Cardiac septum (tissue), 1 donor: ENCODE measurements at regions of chr12 and their contacts with region 1.

Region 1: DNA sequence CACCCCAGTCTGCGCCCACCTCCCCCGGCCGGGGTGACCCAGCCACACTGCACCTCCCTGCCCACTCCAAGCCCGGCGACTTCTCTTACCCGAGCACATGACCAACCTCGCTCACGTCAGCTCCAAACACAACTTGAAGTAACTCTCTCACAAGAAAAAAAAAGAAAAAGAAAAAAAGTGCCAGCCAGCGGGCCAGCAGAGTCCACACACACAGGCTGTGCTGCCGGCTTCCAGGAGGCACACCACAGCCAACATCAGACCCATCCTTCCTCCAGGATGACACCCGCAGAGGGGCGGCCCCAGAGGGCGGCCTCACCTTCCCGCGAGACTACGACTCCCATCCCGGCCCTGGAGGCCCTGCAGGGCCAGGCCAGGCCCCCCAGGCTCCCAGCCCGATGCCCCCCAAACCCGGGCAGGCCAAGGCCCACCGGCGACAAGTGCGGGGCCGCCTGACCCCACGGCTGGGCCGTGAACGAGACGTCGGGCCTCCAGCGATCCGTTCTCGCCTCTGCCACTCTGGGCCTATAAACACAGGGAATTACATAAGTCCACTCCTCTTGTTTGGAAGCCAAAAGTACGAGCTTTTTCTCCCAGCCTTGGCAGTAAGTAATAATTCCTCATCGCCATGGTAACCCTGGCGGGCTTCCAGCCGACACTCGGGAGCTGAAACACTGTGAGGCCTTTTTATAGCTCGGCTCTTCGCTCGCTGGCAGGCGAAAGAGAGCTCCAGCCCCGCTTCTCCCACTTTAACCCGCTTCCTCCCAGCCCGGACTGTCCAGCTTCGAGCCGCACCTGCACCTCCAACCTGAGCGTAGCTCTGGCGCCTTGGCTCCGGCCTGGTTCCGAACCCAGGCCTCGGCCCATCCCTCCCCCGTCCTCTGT is 49.1 kb downstream of the NCOR2 start:
- DNase-seq: peak; percentile 97

Region 2: GRCh38 chr12:124264089-124264795 is 254.1 kb before region 1 on chr12:
- intact Hi-C with region 1: no loop called
- DNase-seq: no peak

Region 3: GRCh38 chr12:124369055-124369900 is 149.0 kb before region 1 on chr12:
- intact Hi-C with region 1: loop called (anchors 5 kb)
- DNase-seq: peak; percentile 93

Region 4: GRCh38 chr12:124379938-124380754 is 138.1 kb before region 1 on chr12:
- intact Hi-C with region 1: loop called (anchors 5 kb)
- DNase-seq: no peak

Region 5: GRCh38 chr12:124453419-124454351 is 64.6 kb before region 1 on chr12:
- intact Hi-C with region 1: loop called (anchors 5 kb)
- DNase-seq: peak; percentile 93

Region 6: GRCh38 chr12:124551268-124552144 is 33.2 kb after region 1 on chr12:
- intact Hi-C with region 1: loop called (anchors 5 kb)
- DNase-seq: peak; percentile 86

Region 7: DNA sequence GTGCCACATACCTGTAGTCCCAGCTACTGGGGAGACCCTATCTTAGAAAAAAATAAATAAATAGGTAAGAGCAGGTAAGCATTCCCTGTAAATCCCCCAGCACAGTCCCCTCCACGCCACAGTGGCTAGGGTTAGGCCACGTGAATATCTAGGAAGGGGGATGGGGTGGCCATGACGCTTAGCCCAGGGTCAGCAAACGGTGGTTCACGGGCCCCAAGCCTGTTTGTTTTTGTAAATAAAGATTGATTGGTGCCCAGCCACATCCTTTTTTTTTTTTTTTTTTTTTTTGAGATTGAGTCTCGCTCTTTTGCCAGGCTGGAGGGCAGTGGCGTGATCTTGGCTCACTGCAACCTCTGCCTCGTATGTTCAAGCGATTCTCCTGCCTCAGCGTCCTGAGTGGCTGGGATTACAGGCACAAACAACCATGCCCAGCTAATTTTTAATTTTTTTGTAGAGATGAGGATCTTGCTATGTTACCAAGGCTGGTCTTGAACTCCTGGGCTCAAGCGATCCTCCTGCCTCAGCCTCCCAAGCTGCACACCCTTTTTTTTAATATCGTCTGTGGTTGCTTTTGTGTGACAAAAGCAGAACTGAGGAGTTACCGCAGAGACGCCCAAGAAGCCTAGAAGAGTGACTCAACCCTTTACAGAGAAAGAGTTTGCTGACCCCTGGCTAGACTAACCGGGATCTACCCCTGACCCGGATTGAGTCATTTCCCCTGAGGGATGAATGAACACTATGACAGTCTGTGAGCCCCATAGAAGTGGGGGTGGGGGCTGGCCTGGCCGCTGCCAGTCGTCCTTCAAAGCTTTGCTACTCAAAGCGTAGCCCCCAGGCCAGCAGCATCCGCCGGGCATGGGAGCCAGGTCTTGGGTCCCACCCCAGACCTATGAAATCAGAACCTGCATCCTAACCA is 162.8 kb after region 1 on chr12:
- intact Hi-C with region 1: loop called (anchors 5 kb)
- DNase-seq: no peak

Region 8: GRCh38 chr12:124767066-124767821 is 249.0 kb after region 1 on chr12:
- intact Hi-C with region 1: loop called (anchors 5 kb)
- DNase-seq: peak; percentile 92

Region 9: GRCh38 chr12:125387206-125387605 is 868.9 kb after region 1 on chr12:
- intact Hi-C with region 1: no loop called
- DNase-seq: no peak